ENCODE measurements at regions of chr9 and their contacts with region 1.

Region 1: DNA sequence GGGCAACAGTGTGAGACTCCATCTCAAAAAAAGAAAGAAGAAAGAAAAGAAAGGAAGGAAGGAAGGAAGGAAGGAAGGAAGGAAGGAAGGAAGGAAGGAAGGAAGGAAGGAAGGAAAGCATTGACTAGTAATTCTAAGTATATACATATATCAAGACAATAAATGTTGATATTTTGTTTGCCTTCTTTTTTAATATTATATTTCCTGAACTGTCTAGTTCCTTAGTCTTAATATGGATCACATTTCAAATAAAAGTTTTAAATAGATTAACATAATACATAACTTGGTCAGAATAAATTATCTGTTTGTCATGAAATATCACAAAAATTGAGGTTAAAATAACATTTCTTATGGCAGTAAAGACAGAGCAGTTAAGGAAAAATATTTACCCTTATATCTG is 1448.4 kb upstream of the C9orf72 start:
- DNase-seq: peak; percentile 84
- H3K4me3 ChIP-seq: peak overlapping the region; percentile 17
- H3K27ac ChIP-seq: peak overlapping the region; percentile 95
- H3K4me1 ChIP-seq: peaks cover 70% of the 10 kb centered on the region
- H3K27me3 ChIP-seq: no peaks in the 10 kb centered on the region
- CTCF ChIP-seq: no peak

Region 2: GRCh38 chr9:28774416-28775235 is 247.0 kb before region 1 on chr9:
- CTCF ChIA-PET with region 1: no interaction called
- POLR2A ChIA-PET with region 1: no interaction called
- intact Hi-C with region 1: loop called (anchors 2 kb)
- DNase-seq: peak; percentile 79
- H3K4me3 ChIP-seq: no peak overlapping the region
- H3K27ac ChIP-seq: peak overlapping the region; percentile 14
- H3K4me1 ChIP-seq: peaks cover 43% of the 10 kb centered on the region
- H3K27me3 ChIP-seq: no peaks in the 10 kb centered on the region
- CTCF ChIP-seq: peak; percentile 80

Region 3: DNA sequence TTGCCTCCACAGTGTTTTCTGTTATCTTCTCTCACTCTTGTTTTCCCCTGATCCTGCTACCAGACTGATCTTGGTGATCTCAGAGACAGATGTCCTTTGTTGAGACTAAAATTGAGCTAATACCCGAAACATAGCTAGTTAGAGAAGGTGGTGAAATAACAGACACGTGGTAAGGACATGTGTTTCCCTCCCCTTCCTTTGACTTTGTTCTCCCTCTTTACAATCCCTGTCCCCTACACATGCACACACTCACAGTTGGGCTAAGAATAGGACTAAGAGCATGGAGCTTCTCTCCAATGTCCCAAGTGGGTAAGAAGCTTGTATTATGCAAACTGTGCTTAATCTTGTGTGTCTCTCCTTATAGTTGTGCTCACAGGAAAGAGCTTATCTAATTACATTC is 154.6 kb after region 1 on chr9:
- CTCF ChIA-PET with region 1: no interaction called
- POLR2A ChIA-PET with region 1: no interaction called
- intact Hi-C with region 1: loop called (anchors 10 kb)
- DNase-seq: peak; percentile 88
- H3K4me3 ChIP-seq: peak overlapping the region; percentile 15
- H3K27ac ChIP-seq: peak overlapping the region; percentile 73
- H3K4me1 ChIP-seq: peaks cover 75% of the 10 kb centered on the region
- H3K27me3 ChIP-seq: no peaks in the 10 kb centered on the region
- CTCF ChIP-seq: no peak

Region 4: GRCh38 chr9:29556317-29556716 is 534.7 kb after region 1 on chr9:
- CTCF ChIA-PET with region 1: no interaction called
- POLR2A ChIA-PET with region 1: no interaction called
- intact Hi-C with region 1: loop called (anchors 5 kb)
- DNase-seq: peak; percentile 94
- H3K4me3 ChIP-seq: no peak overlapping the region
- H3K27ac ChIP-seq: peak overlapping the region; percentile 81
- H3K4me1 ChIP-seq: peaks cover 20% of the 10 kb centered on the region
- H3K27me3 ChIP-seq: no peaks in the 10 kb centered on the region
- CTCF ChIP-seq: no peak

Region 5: DNA sequence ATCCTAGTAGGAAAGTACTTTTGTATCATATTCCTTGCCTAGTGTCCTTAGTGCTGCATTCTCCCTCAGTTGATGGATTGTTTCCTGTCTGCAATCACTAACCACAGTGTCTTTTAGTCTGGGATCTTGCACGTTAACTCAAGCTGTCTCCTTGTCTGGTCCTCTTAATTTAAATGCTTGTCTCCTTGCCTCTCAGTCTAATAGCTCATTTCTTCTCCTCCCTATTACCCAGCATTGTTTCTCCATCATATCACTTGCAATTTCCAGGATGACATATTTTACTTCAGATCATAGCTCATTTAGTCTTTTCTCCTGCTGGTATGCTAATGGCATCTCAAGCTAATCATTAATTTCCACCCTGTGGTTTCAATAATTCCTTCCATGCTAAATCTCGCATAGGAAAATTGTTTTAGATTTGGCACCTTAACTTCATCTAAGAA is 603.7 kb after region 1 on chr9:
- CTCF ChIA-PET with region 1: no interaction called
- POLR2A ChIA-PET with region 1: no interaction called
- intact Hi-C with region 1: loop called (anchors 10 kb)
- DNase-seq: peak; percentile 98
- H3K4me3 ChIP-seq: no peak overlapping the region
- H3K27ac ChIP-seq: peak overlapping the region; percentile 27
- H3K4me1 ChIP-seq: peaks cover 29% of the 10 kb centered on the region
- H3K27me3 ChIP-seq: no peaks in the 10 kb centered on the region
- CTCF ChIP-seq: no peak

Region 6: GRCh38 chr9:29691758-29692407 is 670.3 kb after region 1 on chr9:
- CTCF ChIA-PET with region 1: no interaction called
- POLR2A ChIA-PET with region 1: no interaction called
- intact Hi-C with region 1: loop called (anchors 5 kb)
- DNase-seq: peak; percentile 89
- H3K4me3 ChIP-seq: no peak overlapping the region
- H3K27ac ChIP-seq: no peak overlapping the region
- H3K4me1 ChIP-seq: peaks cover 12% of the 10 kb centered on the region
- H3K27me3 ChIP-seq: no peaks in the 10 kb centered on the region
- CTCF ChIP-seq: peak; percentile 73